Dorsolateral prefrontal cortex (tissue), 120 donors: ENCODE measurements at regions of chr19 and their contacts with region 1.

Region 1: DNA sequence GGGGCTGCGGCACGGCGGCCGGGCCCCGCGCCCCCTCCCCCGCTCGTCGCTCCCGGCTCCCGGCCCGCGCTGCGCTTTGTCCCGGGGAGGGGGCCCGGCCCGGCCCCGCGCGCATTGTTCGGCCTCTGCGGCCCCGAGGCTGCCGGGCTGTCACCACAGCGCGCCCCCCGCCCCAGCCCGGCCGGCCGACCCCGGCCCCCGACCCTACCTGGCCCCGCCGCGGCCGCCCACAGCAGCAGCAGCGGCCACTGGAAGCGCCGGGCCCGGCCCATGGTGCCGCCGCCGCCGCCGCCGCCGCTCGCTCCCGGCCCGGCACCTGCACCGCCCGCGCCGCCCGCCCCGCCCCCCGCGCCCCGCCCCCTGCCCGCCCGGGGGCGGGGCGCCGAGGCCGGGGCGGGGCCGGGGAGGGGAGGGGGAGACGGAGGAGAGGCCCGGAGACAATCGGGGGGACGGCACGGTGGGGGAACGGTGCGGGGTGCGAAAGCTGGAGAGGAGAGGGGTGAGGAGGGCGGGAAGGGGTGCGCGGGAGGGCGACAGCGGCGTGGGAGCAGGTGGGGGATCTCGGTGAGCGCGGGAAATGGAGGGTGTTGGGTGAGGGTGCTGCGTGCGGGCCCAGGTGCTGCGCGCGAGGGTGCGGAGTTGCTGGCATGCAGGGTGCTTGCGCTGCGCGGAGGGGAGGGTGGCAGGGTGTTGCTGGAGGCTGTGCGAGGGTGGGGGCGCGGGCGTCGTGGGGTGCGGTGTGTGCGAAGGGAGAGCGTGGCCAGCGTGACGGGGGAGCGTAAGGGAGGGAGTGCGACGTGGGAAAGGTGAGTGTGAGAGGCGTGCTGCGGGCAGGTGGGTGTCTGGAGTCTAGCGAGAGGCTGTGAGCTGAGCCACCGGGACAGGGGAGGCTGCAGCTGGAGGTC is at the start of gene CADM4:
- DNase-seq: peak in 4 of 10 donors; percentile 60 to 73 (median 66)
- H3K4me3 ChIP-seq: peak within 1 kb of the TSS; percentile 36 to 79 (median 66)
- H3K27ac ChIP-seq: peak within 1 kb of the TSS; percentile 51 to 100 (median 98)
- H3K27me3 ChIP-seq: no peaks in the 10 kb centered on the region
- CTCF ChIP-seq: no peak
- total RNA-seq, gene CADM4: 79.5 to 239 (median 123) TPM

Region 2: DNA sequence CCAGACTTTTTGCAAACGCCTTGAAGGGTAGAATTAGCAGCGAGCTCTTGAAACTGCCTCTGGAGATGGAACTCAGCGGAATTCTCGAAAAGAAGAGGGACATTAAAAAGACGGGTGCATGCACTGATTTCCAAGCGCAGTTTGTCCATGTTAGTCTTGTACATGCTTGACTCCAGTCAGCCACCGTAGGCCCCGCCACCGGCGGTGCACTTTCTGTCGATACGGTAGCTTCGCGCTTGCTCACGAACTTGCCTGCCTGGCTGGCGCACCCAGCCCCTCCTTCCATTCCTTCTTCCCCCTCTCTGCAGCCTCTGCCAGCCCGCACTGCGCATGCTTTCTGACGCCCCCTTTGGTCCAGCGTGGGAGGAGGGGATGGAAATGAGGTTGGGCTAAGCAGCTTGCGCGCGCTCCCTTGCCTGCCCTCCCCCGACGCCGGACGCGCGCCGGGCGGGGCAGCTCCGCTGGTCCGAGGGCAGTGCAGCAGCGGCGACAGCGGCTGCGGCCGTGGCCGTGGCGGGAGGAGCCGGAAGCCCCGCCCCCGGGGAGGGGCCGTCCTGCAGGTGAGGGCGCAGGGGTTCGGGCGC is 106.7 kb before region 1 on chr19 and contains the start of gene ZNF575:
- intact Hi-C with region 1: loop called in 1 of 2 experiments (anchors 5 kb)
- DNase-seq: peak; percentile 86 to 96 (median 92)
- H3K4me3 ChIP-seq: peak within 1 kb of the TSS; percentile 51 to 86 (median 75)
- H3K27ac ChIP-seq: peak within 1 kb of the TSS; percentile 58 to 99 (median 96)
- H3K27me3 ChIP-seq: no peaks in the 10 kb centered on the region
- CTCF ChIP-seq: peak in 22 of 56 donors; percentile 11 to 49 (median 27)
- total RNA-seq, gene ZNF575: 4.4 to 14.3 (median 8.2) TPM

Region 3: DNA sequence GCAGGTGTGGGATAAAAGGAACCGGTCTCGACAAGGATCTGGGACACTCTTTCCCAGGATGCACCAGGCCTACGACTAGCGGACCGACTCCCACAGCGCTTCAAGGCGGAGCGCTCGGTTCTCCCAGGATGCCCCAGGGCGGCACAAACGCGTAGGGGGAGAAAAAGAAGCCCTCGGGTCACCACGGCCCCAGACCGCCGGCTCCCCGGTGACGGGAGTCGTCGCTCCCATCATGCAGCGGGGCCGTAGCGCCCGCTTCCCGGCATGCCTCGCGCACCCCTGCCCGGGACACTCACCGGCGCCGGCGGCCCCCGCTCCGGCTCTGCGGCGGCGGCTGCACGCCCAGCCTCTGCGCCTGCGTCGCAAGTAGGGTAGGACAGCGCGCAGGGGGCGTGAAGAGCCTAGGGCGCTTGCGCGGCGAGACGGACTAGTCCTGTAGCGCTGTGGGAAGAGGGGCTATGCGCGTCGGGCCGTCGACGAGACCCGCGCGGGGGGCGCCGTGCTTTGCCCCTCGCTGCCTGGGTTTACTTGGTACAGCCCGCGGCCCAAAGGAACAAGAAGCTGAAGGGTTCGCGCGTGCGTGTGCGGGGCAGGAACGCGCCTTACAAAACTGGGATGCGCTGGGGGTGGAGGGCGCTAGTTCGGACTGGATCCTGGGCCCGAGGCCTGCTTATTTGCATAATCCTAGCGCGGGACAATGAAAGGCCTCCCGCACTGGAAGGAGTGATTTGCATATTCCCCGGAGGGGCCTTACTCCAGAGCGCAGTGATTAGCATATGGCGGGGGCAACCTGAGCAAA is 20.3 kb before region 1 on chr19 and contains the start of gene ZNF428:
- intact Hi-C with region 1: loop called in 1 of 2 experiments (anchors 2 kb)
- DNase-seq: peak; percentile 88 to 96 (median 94)
- H3K4me3 ChIP-seq: peak within 1 kb of the TSS; percentile 52 to 96 (median 81)
- H3K27ac ChIP-seq: peak within 1 kb of the TSS; percentile 87 to 100 (median 98)
- H3K27me3 ChIP-seq: no peaks in the 10 kb centered on the region
- CTCF ChIP-seq: peak in 32 of 56 donors; percentile 2 to 55 (median 28)
- total RNA-seq, gene ZNF428: 58.0 to 110 (median 83.3) TPM

Region 4: DNA sequence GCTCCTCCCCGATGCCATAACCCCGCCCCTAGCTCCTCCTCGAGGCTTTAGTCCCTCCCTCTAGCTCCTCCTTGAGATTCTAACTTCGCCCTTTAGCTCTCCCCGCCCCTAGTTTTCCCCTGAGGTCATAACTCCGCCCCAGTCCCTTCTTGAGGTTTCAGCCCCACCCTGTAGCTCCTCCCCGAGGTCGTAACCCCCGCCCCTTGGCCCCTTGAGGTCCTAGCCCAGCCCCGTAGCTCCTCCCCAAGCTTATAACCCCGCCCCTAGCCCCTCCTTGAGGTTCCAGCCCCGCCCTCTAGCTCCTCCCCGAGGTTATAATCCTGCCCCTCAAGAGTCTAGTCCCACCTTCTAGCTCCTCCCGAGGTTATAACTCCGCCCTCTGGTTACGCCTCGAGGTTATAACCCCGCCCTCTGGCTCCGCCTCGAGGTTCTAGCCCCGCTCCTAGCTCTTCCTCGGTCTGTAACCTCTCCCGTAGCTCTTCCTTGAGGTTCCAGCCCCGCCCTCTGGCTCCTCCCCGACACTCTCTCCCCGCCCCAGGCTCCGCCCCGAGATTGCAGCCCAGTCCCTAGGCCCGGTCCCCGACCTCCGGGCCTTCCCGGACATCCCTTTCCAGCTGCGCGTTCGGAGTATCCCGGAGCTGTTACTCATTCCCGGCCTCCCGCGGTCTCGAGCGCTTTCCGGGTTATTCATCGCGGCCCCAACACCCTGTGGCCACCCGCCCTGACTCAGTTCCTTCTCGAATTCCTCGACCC is 28.8 kb after region 1 on chr19:
- intact Hi-C with region 1: loop called in 1 of 2 experiments (anchors 2 kb)
- DNase-seq: peak; percentile 88 to 98 (median 97)
- H3K4me3 ChIP-seq: peak overlapping the region; percentile 44 to 82 (median 67)
- H3K27ac ChIP-seq: peak overlapping the region; percentile 17 to 96 (median 89)
- H3K27me3 ChIP-seq: no peaks in the 10 kb centered on the region
- CTCF ChIP-seq: peak in 8 of 56 donors; percentile 1 to 16 (median 11)